Esophagus squamous epithelium (tissue), 5 donors: ENCODE measurements at regions of chr3 and their contacts with region 1.

Region 1: DNA sequence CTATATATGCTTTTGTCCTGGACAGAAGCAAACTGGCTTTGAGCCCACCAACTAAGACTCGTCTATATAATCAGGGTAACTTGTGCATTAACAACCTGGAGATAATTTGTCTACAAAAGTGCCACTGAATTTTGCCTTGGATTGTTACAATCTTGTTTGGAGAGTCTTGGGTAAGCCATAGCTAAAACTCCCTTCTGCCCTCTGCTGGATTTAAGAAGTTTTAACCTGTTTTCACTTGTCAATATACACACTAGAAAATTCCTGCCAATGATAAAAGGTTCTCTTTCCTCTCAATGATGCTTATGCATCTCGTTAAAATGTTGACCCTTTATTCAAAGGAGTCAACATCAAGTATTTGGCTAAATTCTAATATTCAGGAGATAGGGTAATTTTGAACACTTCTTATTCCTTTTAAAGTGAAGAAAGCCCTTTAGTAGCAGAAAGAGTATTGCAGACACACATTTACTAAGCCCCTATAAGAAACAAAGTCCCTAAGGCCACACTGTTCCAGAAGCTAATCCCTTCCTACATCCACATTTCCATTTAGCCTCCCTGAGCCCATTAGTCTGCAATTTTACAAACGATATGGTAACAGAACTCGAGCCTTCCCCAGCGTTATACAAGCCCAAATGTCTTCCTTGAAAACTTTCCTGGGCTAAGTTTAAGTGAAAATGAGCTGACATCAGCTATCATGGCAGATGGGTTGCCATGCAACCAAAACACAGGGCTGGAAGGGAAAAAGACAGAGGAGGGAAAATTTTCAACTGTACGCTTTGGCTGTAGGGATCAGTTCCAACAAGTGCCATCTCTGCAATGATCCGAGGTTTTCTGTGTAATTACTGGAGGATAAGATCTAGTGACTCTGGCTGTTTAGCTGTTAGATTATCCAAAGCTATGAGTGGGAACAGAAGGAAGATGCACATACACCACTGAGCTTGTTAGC is 75.9 kb upstream of the FGF12 start:
- DNase-seq: no peak
- H3K4me3 ChIP-seq: no peak overlapping the region
- H3K27ac ChIP-seq: no peak overlapping the region
- H3K4me1 ChIP-seq: no peaks in the 10 kb centered on the region
- H3K27me3 ChIP-seq: no peaks in the 10 kb centered on the region
- CTCF ChIP-seq: peak in 4 of 6 experiments; percentile 39 to 57 (median 40)
- POLR2A ChIP-seq: no peak

Region 2: DNA sequence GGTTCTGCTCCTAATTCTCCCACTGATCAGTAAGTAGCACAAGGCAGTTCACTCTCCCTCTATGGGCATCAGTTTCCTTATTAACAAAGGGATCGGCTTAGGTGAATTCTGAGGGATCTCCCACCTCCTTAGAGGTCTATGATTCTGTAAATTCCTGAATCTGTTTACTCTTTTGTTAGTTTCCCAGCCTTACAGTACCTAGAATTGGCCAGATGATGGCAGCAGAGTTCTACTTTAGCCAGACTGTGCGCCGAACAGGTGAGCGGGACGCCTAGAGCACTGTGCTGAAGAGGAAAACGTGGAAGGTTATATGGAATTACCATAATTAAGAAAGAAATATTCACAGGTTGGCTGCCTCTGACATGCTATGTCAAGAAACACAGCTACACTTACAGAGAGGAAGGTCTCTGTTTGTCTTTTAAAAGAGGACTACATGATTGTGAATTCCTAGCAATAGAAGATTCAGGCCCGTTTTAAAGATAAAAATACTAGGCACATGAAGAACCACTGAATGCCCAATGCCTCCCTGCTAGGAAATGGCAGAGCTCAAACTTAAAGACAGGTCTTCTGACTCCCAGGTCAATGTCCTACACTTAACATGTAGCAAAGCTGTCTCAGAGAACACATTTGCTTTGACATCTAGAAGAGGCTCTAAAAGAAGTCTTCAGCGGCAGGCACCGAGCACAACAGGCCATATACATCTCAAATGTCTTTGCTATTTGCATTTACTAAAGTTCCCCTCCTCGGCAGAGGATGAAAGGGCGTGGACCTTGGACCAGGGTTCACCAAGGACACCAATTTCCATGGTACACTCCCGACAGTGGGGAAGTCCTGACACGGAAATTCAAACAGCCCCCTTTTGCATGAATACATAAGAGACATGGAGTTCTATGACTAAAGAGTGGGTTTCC is 335.7 kb before region 1 on chr3:
- intact Hi-C with region 1: loop called (anchors 10 kb)
- DNase-seq: no peak
- H3K4me3 ChIP-seq: no peak overlapping the region
- H3K27ac ChIP-seq: no peak overlapping the region
- H3K4me1 ChIP-seq: peaks cover 0 to 4% (median 0%) of the 10 kb centered on the region in 3 donors
- H3K27me3 ChIP-seq: peaks cover 0 to 22% (median 0%) of the 10 kb centered on the region in 4 donors
- CTCF ChIP-seq: peak; percentile 38 to 87 (median 84)
- POLR2A ChIP-seq: no peak

Region 3: GRCh38 chr3:192566706-192567290 is 236.4 kb before region 1 on chr3:
- intact Hi-C with region 1: loop called (anchors 5 kb)
- DNase-seq: peak; percentile 1
- H3K4me3 ChIP-seq: no peak overlapping the region
- H3K27ac ChIP-seq: no peak overlapping the region
- H3K4me1 ChIP-seq: peaks cover 0 to 12% (median 0%) of the 10 kb centered on the region in 3 donors
- H3K27me3 ChIP-seq: no peaks in the 10 kb centered on the region
- CTCF ChIP-seq: peak; percentile 24 to 73 (median 64)
- POLR2A ChIP-seq: no peak

Region 4: GRCh38 chr3:193060748-193061546 is 257.7 kb after region 1 on chr3:
- intact Hi-C with region 1: no loop called
- DNase-seq: no peak
- H3K4me3 ChIP-seq: no peak overlapping the region
- H3K27ac ChIP-seq: no peak overlapping the region
- H3K4me1 ChIP-seq: no peaks in the 10 kb centered on the region
- H3K27me3 ChIP-seq: peaks cover 0 to 5% (median 2%) of the 10 kb centered on the region in 4 donors
- CTCF ChIP-seq: no peak
- POLR2A ChIP-seq: no peak

Region 5: GRCh38 chr3:193134844-193135243 is 331.6 kb after region 1 on chr3:
- intact Hi-C with region 1: no loop called
- DNase-seq: no peak
- H3K4me3 ChIP-seq: no peak overlapping the region
- H3K27ac ChIP-seq: no peak overlapping the region
- H3K4me1 ChIP-seq: no peaks in the 10 kb centered on the region
- H3K27me3 ChIP-seq: peaks cover 0 to 76% (median 0%) of the 10 kb centered on the region in 4 donors
- CTCF ChIP-seq: no peak
- POLR2A ChIP-seq: no peak